ENCODE measurements at regions of chr9 and their contacts with region 1.

Region 1: GRCh38 chr9:76445976-76446375 is 13.0 kb upstream of the GCNT1 start:
- DNase-seq: no peak
- ATAC-seq: no peak

Region 2: DNA sequence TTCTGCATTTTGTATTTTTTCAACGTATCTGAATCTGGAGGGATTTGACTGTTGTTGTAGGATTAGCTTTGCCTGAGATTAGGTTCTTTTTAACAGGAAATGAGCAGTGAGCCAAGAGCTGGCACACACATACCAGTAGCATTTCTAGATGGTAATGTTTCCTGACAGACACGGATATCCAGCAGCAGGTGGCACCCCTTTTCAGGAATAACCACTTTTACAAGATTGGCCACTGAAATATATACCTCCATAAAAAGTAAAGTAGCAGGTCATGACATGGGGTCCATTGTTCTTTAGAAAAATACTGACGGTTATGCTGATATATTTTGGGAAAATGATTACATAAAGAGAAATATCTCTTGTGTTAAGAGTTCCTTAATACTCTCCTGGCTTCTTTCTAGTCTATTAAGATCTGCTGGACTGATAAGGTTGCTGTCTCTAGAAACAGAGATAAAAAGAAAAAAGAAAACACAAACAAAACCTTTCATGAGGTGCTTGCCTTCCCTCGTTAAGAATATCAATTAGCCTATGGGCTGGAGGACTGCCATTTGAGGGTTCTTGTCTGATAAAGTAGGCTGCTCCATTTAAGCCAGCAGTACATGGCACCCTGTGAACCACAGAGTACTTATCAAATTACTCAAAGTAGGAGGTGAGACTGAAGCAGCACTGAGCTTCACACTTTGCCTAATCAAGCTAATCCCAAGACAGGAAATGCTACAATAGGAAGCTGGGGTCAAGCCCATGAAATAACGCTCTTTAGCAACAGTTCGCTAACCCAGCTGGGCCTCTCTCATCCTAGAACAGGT is 216.7 kb after region 1 on chr9:
- intact Hi-C with region 1: loop called (anchors 5 kb)
- DNase-seq: no peak
- ATAC-seq: no peak

Region 3: DNA sequence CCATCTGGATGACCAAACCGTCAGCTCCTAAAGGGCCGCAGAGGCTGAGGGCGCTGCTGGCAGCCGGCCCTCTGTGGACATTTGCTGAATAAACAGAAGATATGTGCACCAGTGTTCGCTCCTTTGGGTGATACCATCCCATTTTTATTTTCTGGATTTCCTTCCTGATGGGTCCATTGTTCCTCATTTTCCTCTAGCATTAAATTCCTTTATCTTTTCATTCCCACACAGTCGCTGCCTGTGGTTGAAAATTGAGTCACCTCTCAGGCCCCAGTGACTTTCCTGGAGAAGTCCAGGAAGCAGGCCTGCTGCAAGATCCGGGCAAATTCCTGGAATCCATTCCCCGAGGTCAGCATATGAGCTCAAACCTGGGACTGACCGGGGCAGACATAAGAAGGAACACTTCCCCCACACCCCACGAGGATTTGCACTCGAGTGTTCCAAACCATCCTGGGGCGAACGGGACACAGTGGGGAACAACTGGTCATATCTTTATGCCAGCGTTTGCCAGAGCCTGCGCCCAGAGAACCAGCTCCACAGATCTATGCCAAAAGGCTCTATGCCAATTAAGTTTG is 231.6 kb after region 1 on chr9:
- intact Hi-C with region 1: no loop called
- DNase-seq: no peak
- ATAC-seq: no peak

Region 4: GRCh38 chr9:76687861-76688391 is 241.9 kb after region 1 on chr9:
- intact Hi-C with region 1: no loop called
- DNase-seq: no peak
- ATAC-seq: no peak

Region 5: GRCh38 chr9:76704593-76705204 is 258.7 kb after region 1 on chr9:
- intact Hi-C with region 1: loop called (anchors 2 kb)
- DNase-seq: no peak
- ATAC-seq: peak; percentile 72